Ovary (tissue), 10 donors: ENCODE measurements at regions of chr4 and their contacts with region 1.

Region 1: GRCh38 chr4:173505924-173506518 is 24.0 kb downstream of the HAND2 start:
- DNase-seq: peak; percentile 55 to 77 (median 64)
- H3K4me3 ChIP-seq: no peak overlapping the region
- H3K27ac ChIP-seq: no peak overlapping the region
- H3K4me1 ChIP-seq: peaks cover 3% of the 10 kb centered on the region
- H3K27me3 ChIP-seq: no peaks in the 10 kb centered on the region
- CTCF ChIP-seq: peak in 2 of 3 donors; percentile 42 to 59
- EP300 ChIP-seq: no peak
- POLR2A ChIP-seq: no peak

Region 2: GRCh38 chr4:173748353-173748752 is 242.3 kb after region 1 on chr4:
- intact Hi-C with region 1: loop called in 1 of 4 experiments (anchors 10 kb)
- DNase-seq: no peak
- H3K4me3 ChIP-seq: no peak overlapping the region
- H3K27ac ChIP-seq: no peak overlapping the region
- H3K4me1 ChIP-seq: no peaks in the 10 kb centered on the region
- H3K27me3 ChIP-seq: no peaks in the 10 kb centered on the region
- CTCF ChIP-seq: no peak
- EP300 ChIP-seq: no peak
- POLR2A ChIP-seq: no peak

Region 3: DNA sequence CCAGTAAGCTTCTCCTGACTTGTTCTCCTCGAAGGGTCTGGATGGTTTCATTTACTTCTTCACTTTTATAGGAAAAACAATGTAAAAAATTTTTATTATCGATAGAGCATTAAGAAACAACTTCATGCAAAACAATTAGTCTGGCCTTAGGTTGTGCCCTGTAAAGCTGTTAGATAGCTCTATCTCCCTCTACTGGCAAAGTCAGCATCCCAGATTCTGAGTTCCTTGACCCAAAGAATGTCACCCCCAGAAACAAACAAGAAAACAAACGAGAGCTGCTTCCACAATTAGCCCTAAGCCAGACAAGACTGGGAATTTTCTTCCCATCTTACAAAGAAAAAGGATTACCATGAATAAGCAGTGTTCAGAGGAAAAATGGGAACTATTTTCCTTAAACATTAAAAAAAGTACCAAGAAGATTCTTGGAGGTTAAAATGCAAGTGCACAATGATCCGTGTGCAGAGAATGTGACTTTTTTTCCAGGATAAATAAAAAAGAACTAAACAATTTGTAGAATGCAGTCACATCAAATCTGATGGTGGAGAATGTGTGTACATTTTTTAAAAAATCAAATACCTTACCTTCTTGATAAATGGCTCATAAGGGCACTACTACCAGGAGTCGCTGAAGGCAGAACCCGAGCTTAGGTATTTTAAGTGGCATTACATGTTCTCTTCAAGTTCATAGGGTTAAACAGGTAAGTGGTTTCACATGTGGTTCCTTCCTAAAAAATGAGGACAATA is 484.3 kb after region 1 on chr4:
- intact Hi-C with region 1: loop called in 2 of 4 experiments (anchors 5 to 10 kb)
- DNase-seq: no peak
- H3K4me3 ChIP-seq: no peak overlapping the region
- H3K27ac ChIP-seq: peak overlapping the region in 1 of 2 donors; percentile 49
- H3K4me1 ChIP-seq: peaks cover 4% of the 10 kb centered on the region
- H3K27me3 ChIP-seq: no peaks in the 10 kb centered on the region
- CTCF ChIP-seq: peak in 1 of 3 donors; percentile 39
- EP300 ChIP-seq: no peak
- POLR2A ChIP-seq: no peak

Region 4: DNA sequence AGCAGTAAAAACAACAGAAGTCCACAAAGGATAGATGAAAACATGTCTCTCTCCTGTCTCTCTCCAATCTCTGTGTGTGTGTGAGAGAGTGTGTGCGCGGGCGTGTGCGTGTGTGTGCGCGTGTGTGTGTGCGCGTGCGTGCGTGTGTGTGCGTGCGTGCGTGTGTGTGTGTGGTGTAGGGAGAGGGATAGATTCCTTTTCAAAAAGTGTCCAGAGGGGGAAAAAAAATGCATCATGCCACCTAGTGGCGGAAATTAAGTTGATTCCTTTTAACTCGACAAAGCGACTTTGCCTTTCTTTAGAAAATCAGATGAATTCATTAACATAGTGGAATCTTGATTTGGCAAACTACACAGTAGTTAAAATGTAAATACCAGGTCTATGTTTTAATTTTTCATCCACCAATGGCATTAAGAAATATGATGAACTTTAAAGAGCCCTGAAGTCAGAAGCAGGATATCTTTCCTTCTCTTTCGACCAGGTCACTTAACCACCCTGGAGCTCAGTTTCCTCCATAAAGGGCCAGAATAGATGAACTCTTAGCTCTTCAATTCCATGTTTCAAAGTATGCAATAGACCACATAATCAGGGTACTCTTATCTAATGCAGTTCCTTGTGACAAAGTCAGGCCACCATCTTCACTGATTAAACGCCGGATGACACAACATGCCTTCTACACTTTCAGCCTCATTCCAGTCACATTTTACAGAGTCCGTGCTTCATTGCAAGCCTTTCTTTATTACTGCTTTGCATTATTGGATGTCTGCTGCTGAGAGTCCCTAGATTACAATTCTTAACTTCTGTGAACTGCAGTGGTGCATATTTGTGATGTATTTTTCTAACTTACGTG is 614.6 kb after region 1 on chr4:
- intact Hi-C with region 1: loop called in 1 of 4 experiments (anchors 5 kb)
- DNase-seq: peak; percentile 68 to 88 (median 72)
- H3K4me3 ChIP-seq: peak overlapping the region; percentile 23
- H3K27ac ChIP-seq: no peak overlapping the region
- H3K4me1 ChIP-seq: peaks cover 3% of the 10 kb centered on the region
- H3K27me3 ChIP-seq: no peaks in the 10 kb centered on the region
- CTCF ChIP-seq: peak; percentile 25 to 73 (median 63)
- EP300 ChIP-seq: no peak
- POLR2A ChIP-seq: peak; percentile 27

Region 5: DNA sequence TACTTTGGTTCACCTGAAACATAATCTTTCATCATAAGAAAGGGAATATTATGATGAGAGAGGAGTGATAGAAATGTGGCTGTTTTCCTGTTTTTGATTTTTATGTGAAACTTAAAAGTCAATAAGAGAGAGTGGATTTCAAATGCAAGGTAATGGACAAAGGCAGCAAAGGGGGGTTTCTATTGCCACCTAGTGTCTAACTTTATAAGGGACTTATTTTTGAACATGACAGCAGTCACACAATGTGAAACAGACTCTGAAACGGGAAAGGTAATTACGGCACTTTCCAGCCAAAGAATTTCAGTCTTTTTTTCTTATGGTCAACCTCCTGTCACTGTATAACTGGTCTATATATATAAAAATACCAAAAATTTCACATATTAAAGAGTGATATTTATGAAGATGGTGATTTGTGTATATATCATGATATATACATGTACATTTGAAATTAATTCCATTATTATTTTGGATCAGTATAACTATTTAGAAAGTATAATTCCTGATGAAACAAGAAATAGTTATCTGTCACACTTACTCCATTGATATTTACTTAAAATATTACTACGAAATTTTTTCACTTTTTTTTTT is 650.3 kb after region 1 on chr4:
- intact Hi-C with region 1: loop called in 1 of 4 experiments (anchors 5 kb)
- DNase-seq: no peak
- H3K4me3 ChIP-seq: no peak overlapping the region
- H3K27ac ChIP-seq: no peak overlapping the region
- H3K4me1 ChIP-seq: no peaks in the 10 kb centered on the region
- H3K27me3 ChIP-seq: no peaks in the 10 kb centered on the region
- CTCF ChIP-seq: peak; percentile 23 to 60 (median 54)
- EP300 ChIP-seq: no peak
- POLR2A ChIP-seq: no peak

Region 6: GRCh38 chr4:174318829-174319764 is 813.1 kb after region 1 on chr4:
- intact Hi-C with region 1: loop called in 1 of 4 experiments (anchors 10 kb)
- DNase-seq: no peak
- H3K4me3 ChIP-seq: no peak overlapping the region
- H3K27ac ChIP-seq: no peak overlapping the region
- H3K4me1 ChIP-seq: no peaks in the 10 kb centered on the region
- H3K27me3 ChIP-seq: no peaks in the 10 kb centered on the region
- CTCF ChIP-seq: peak; percentile 14 to 33 (median 18)
- EP300 ChIP-seq: no peak
- POLR2A ChIP-seq: no peak